ENCODE measurements at regions of chr16 and their contacts with region 1.

Region 1: DNA sequence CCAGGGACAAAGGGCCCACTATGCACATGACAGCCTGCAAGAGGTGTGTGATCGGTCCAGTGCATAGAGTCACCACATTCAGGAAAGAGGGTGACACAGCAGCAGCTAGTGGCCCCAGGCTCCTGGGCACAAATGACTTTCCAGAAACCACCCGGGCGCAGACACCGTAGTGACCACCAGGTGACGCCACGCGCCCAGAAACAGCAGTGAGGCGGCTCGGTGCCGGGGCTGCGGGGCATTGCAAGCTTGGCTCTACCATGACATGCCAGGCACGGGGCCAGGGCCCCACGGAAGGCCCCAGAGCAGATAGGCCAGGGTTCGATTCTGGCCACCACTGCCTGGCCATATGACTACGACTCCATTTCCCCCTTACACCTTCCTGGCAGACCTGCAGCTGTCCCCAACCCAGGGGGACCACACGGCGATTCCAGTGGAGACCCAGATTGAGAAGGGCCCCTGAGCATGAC is 6.7 kb downstream of the RHBDF1 start:
- DNase-seq: peak; percentile 71 to 91 (median 83)
- ATAC-seq: peak; percentile 99
- H3K4me3 ChIP-seq: no peak overlapping the region
- H3K4me3 Mint-ChIP-seq: no peak overlapping the region
- H3K27ac ChIP-seq: no peak overlapping the region
- H3K27ac Mint-ChIP-seq: no peak overlapping the region
- H3K4me1 ChIP-seq: no peaks in the 10 kb centered on the region
- H3K4me1 Mint-ChIP-seq: peaks cover 3% of the 10 kb centered on the region
- H3K27me3 ChIP-seq: no peaks in the 10 kb centered on the region
- H3K27me3 Mint-ChIP-seq: peaks cover 11% of the 10 kb centered on the region
- CTCF ChIP-seq: peak; percentile 91

Region 2: GRCh38 chr16:45454-45853 is 20.2 kb before region 1 on chr16:
- CTCF ChIA-PET with region 1: interaction called, 15 read pairs
- POLR2A ChIA-PET with region 1: no interaction called
- intact Hi-C with region 1: no loop called
- DNase-seq: no peak
- ATAC-seq: no peak
- H3K4me3 ChIP-seq: no peak overlapping the region
- H3K4me3 Mint-ChIP-seq: no peak overlapping the region
- H3K27ac ChIP-seq: no peak overlapping the region
- H3K27ac Mint-ChIP-seq: no peak overlapping the region
- H3K4me1 ChIP-seq: peaks cover 4% of the 10 kb centered on the region
- H3K4me1 Mint-ChIP-seq: peaks cover 21% of the 10 kb centered on the region
- H3K27me3 ChIP-seq: no peaks in the 10 kb centered on the region
- H3K27me3 Mint-ChIP-seq: no peaks in the 10 kb centered on the region
- CTCF ChIP-seq: no peak

Region 3: DNA sequence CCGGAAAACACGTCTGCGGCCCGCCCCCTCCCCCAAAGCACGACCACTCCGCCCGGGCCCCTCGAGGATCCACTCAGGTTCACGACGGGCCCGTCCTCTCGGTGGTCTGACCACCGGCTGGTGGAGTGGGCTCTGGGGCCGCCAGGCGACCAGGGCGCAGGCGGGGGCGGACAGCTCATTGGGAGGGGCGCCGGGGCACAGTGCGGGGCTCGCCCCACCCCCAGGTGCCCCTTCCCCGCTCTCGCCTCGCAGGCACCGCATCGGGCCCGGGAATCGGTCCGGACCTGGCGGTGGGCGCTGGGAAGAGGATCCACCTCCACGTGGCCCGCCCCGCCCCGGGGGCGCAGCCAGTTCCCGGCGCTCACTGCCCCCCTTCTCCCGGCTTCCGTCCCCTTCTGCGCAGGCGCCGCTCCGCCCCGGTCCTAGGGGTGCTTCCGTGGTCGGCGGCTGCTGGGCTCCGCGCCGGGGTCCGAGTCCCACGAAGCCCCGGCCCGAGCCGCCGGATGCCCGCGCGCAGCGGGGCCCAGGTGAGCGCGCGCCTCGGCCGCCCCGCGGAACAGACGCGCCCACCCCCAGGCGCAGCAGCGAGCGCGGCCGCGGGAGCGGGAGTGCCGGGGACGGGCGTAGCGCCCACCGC is 12.2 kb after region 1 on chr16 and contains the start of gene MPG:
- CTCF ChIA-PET with region 1: interaction called, 10 read pairs
- POLR2A ChIA-PET with region 1: interaction called, 4 read pairs
- intact Hi-C with region 1: loop called in 1 of 2 experiments (anchors 1 kb)
- DNase-seq: peak; percentile 55 to 90 (median 80)
- ATAC-seq: peak; percentile 91
- H3K4me3 ChIP-seq: peak within 1 kb of the TSS; percentile 68 to 69
- H3K4me3 Mint-ChIP-seq: peak within 1 kb of the TSS; percentile 87
- H3K27ac ChIP-seq: peak within 1 kb of the TSS; percentile 31 to 55
- H3K27ac Mint-ChIP-seq: peak within 1 kb of the TSS; percentile 73
- H3K4me1 ChIP-seq: peaks cover 26% of the 10 kb centered on the region
- H3K4me1 Mint-ChIP-seq: peaks cover 31% of the 10 kb centered on the region
- H3K27me3 ChIP-seq: peaks cover 5 to 7% of the 10 kb centered on the region in 2 experiments
- H3K27me3 Mint-ChIP-seq: peaks cover 11% of the 10 kb centered on the region
- CTCF ChIP-seq: no peak
- total RNA-seq, gene MPG: 12.3 to 13.0 TPM

Region 4: DNA sequence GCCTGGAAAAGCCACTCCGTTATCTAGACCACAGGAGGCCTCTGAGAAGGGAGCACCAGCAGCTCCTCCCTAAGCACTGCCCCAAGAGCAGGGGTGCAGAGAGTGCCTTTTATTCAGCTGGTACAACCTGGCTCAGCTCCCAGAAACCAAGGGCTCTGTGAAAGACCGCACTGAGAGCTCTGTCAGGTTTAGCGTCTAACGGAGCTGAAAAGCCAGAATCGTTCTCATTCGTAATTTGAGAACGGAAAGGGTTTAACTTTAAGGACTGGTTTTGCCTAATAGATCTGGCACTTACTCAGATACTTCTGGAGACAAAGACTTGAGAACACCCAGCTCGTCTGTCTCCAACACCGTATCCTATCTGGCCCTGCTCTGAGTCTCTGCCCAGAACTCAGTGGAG is 25.8 kb after region 1 on chr16:
- CTCF ChIA-PET with region 1: interaction called, 309 read pairs
- POLR2A ChIA-PET with region 1: interaction called, 12 read pairs
- intact Hi-C with region 1: no loop called
- DNase-seq: no peak
- ATAC-seq: no peak
- H3K4me3 ChIP-seq: no peak overlapping the region
- H3K4me3 Mint-ChIP-seq: no peak overlapping the region
- H3K27ac ChIP-seq: no peak overlapping the region
- H3K27ac Mint-ChIP-seq: no peak overlapping the region
- H3K4me1 ChIP-seq: no peaks in the 10 kb centered on the region
- H3K4me1 Mint-ChIP-seq: no peaks in the 10 kb centered on the region
- H3K27me3 ChIP-seq: no peaks in the 10 kb centered on the region
- H3K27me3 Mint-ChIP-seq: no peaks in the 10 kb centered on the region
- CTCF ChIP-seq: no peak

Region 5: GRCh38 chr16:106623-107324 is 41.1 kb after region 1 on chr16:
- CTCF ChIA-PET with region 1: interaction called, 309 read pairs
- POLR2A ChIA-PET with region 1: no interaction called
- intact Hi-C with region 1: no loop called
- DNase-seq: peak in 8 of 9 experiments; percentile 31 to 82 (median 60)
- ATAC-seq: peak; percentile 80
- H3K4me3 ChIP-seq: no peak overlapping the region
- H3K4me3 Mint-ChIP-seq: no peak overlapping the region
- H3K27ac ChIP-seq: no peak overlapping the region
- H3K27ac Mint-ChIP-seq: no peak overlapping the region
- H3K4me1 ChIP-seq: no peaks in the 10 kb centered on the region
- H3K4me1 Mint-ChIP-seq: peaks cover 3% of the 10 kb centered on the region
- H3K27me3 ChIP-seq: no peaks in the 10 kb centered on the region
- H3K27me3 Mint-ChIP-seq: no peaks in the 10 kb centered on the region
- CTCF ChIP-seq: peak; percentile 72

Region 6: GRCh38 chr16:180938-181667 is 115.4 kb after region 1 on chr16:
- CTCF ChIA-PET with region 1: interaction called, 13 read pairs
- POLR2A ChIA-PET with region 1: no interaction called
- intact Hi-C with region 1: loop called in 1 of 2 experiments (anchors 1 kb)
- DNase-seq: peak; percentile 74 to 93 (median 85)
- ATAC-seq: peak; percentile 89
- H3K4me3 ChIP-seq: peak overlapping the region; percentile 42 to 59
- H3K4me3 Mint-ChIP-seq: peak overlapping the region; percentile 63
- H3K27ac ChIP-seq: no peak overlapping the region
- H3K27ac Mint-ChIP-seq: no peak overlapping the region
- H3K4me1 ChIP-seq: peaks cover 20% of the 10 kb centered on the region
- H3K4me1 Mint-ChIP-seq: peaks cover 8% of the 10 kb centered on the region
- H3K27me3 ChIP-seq: peaks cover 14 to 16% of the 10 kb centered on the region in 2 experiments
- H3K27me3 Mint-ChIP-seq: peaks cover 16% of the 10 kb centered on the region
- CTCF ChIP-seq: peak; percentile 96

Region 7: GRCh38 chr16:970766-971581 is 905.3 kb after region 1 on chr16 and contains the start of gene LMF1:
- CTCF ChIA-PET with region 1: no interaction called
- POLR2A ChIA-PET with region 1: no interaction called
- intact Hi-C with region 1: no loop called
- DNase-seq: peak; percentile 90 to 99 (median 96)
- ATAC-seq: peak; percentile 98
- H3K4me3 ChIP-seq: peak within 1 kb of the TSS; percentile 69 to 89
- H3K4me3 Mint-ChIP-seq: peak within 1 kb of the TSS; percentile 80
- H3K27ac ChIP-seq: peak within 1 kb of the TSS; percentile 74 to 76
- H3K27ac Mint-ChIP-seq: peak within 1 kb of the TSS; percentile 75
- H3K4me1 ChIP-seq: peaks cover 26% of the 10 kb centered on the region
- H3K4me1 Mint-ChIP-seq: peaks cover 27% of the 10 kb centered on the region
- H3K27me3 ChIP-seq: no peaks in the 10 kb centered on the region
- H3K27me3 Mint-ChIP-seq: no peaks in the 10 kb centered on the region
- CTCF ChIP-seq: no peak
- total RNA-seq, gene LMF1: 18.2 to 20.1 TPM